B cell (primary cell): ENCODE measurements at regions of chr15 and their contacts with region 1.

Region 1: GRCh38 chr15:59247364-59247763 is 40.7 kb downstream of the LDHAL6B start:
- DNase-seq: peak; percentile 81
- ATAC-seq: peak; percentile 52
- H3K4me3 ChIP-seq: no peak overlapping the region
- H3K4me3 Mint-ChIP-seq: no peak overlapping the region
- H3K27ac ChIP-seq: no peak overlapping the region
- H3K27ac Mint-ChIP-seq: peak overlapping the region; percentile 37
- H3K4me1 ChIP-seq: peaks cover 30 to 42% of the 10 kb centered on the region in 2 donors
- H3K4me1 Mint-ChIP-seq: peaks cover 59% of the 10 kb centered on the region
- H3K27me3 ChIP-seq: no peaks in the 10 kb centered on the region
- H3K27me3 Mint-ChIP-seq: no peaks in the 10 kb centered on the region
- CTCF ChIP-seq: peak; percentile 80

Region 2: GRCh38 chr15:59174835-59175831 is 72.2 kb before region 1 on chr15:
- CTCF ChIA-PET with region 1: interaction called, 13 read pairs
- POLR2A ChIA-PET with region 1: no interaction called
- intact Hi-C with region 1: no loop called
- DNase-seq: peak; percentile 57
- ATAC-seq: peak; percentile 94
- H3K4me3 ChIP-seq: no peak overlapping the region
- H3K4me3 Mint-ChIP-seq: no peak overlapping the region
- H3K27ac ChIP-seq: no peak overlapping the region
- H3K27ac Mint-ChIP-seq: no peak overlapping the region
- H3K4me1 ChIP-seq: no peaks in the 10 kb centered on the region
- H3K4me1 Mint-ChIP-seq: peaks cover 7% of the 10 kb centered on the region
- H3K27me3 ChIP-seq: no peaks in the 10 kb centered on the region
- H3K27me3 Mint-ChIP-seq: no peaks in the 10 kb centered on the region
- CTCF ChIP-seq: peak; percentile 55

Region 3: DNA sequence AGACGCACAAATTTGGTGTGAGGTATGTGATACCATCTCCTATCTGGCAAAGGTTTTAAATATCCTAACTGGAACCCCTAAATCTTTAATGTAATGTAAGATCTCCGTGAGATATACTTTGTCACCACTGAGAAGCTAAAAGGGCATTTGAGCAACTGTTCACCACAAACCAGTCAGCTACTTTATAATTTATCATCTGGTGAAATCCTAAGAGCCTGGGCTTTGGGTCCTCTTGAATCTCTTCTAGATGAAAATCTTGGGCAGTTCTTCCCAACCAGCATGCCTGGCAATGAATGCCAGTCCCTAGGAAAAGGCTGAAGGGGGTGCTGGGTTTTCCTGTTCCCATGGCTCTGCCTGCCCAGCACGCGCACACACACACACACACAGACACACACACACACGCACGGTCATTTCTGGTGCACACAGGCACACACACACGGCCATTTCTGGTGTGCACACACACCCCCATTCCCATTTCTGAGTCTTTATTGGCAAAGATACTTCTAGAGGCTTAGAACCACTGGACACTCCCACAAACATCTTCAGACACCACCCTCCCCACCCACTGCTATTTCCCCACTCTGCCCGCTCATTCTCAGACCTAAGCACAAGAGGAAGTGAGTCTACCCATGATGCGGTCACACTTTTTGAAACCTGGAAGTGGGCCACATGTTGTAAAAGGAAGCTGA is 52.7 kb after region 1 on chr15:
- CTCF ChIA-PET with region 1: interaction called, 23 read pairs
- POLR2A ChIA-PET with region 1: interaction called, 8 read pairs
- intact Hi-C with region 1: loop called (anchors 1 kb)
- DNase-seq: peak; percentile 92
- ATAC-seq: peak; percentile 89
- H3K4me3 ChIP-seq: peak overlapping the region in 2 of 5 experiments; percentile 16 to 26
- H3K4me3 Mint-ChIP-seq: peak overlapping the region; percentile 64
- H3K27ac ChIP-seq: peak overlapping the region; percentile 62 to 78
- H3K27ac Mint-ChIP-seq: peak overlapping the region; percentile 79
- H3K4me1 ChIP-seq: peaks cover 70 to 88% of the 10 kb centered on the region in 2 donors
- H3K4me1 Mint-ChIP-seq: peaks cover 84% of the 10 kb centered on the region
- H3K27me3 ChIP-seq: no peaks in the 10 kb centered on the region
- H3K27me3 Mint-ChIP-seq: no peaks in the 10 kb centered on the region
- CTCF ChIP-seq: no peak

Region 4: DNA sequence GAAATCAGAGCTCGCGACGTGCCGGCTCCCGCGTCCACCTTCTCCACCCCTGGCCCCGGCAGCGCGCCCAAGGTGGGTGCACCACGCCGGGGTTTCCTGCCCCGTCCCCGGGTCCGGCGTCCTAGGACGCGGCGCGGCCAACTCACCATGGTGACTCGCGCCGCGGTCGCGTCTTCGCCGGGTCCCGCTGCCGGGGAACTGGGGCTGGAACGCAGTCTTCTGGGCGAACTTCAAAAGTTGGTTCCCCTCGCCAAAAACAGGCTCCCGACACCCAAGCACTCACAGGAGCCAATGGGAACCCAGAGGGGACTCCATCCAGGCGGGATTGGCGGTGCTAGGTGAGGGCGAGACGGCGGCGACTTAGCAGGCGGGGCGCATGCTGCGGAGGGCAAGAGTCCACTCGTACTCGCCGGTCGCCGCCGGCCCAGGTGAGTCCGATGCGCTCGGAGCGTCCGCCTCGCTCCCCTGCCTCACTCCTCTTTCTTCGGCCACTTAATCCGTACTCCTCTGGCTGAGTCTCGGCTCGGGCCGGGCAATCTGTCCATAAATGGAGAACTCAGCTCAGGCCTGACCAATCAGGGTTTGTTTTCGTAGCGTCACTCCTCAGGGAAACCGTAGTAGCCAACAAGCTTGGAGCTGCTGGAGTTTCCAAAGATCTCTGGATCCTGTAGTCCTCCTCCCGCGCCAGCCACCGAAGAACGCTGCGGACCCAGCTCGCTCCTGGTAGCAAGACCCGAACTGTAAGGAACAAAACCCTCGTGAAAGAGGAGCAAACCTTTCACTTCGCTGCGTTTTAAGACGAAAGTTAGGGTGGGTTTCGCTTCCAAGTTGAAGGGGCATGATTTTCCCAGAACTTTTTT is 125.2 kb after region 1 on chr15 and contains the start of gene MYO1E:
- CTCF ChIA-PET with region 1: interaction called, 9 read pairs
- POLR2A ChIA-PET with region 1: no interaction called
- intact Hi-C with region 1: loop called (anchors 1 kb)
- DNase-seq: peak; percentile 73
- ATAC-seq: peak; percentile 62
- H3K4me3 ChIP-seq: peak within 1 kb of the TSS; percentile 63 to 98 (median 85)
- H3K4me3 Mint-ChIP-seq: peak within 1 kb of the TSS; percentile 99
- H3K27ac ChIP-seq: peak within 1 kb of the TSS; percentile 72 to 77
- H3K27ac Mint-ChIP-seq: peak within 1 kb of the TSS; percentile 94
- H3K4me1 ChIP-seq: peaks cover 35 to 37% of the 10 kb centered on the region in 2 donors
- H3K4me1 Mint-ChIP-seq: peaks cover 53% of the 10 kb centered on the region
- H3K27me3 ChIP-seq: no peaks in the 10 kb centered on the region
- H3K27me3 Mint-ChIP-seq: no peaks in the 10 kb centered on the region
- CTCF ChIP-seq: no peak
- total RNA-seq, gene MYO1E: 100.0 and 111 TPM in 2 replicates

Region 5: GRCh38 chr15:59516655-59517461 is 269.5 kb after region 1 on chr15:
- CTCF ChIA-PET with region 1: interaction called, 11 read pairs
- POLR2A ChIA-PET with region 1: interaction called, 4 read pairs
- intact Hi-C with region 1: no loop called
- DNase-seq: peak; percentile 77
- ATAC-seq: peak; percentile 77
- H3K4me3 ChIP-seq: peak overlapping the region in 2 of 5 experiments; percentile 11 to 25
- H3K4me3 Mint-ChIP-seq: peak overlapping the region; percentile 70
- H3K27ac ChIP-seq: peak overlapping the region; percentile 93 to 94
- H3K27ac Mint-ChIP-seq: peak overlapping the region; percentile 95
- H3K4me1 ChIP-seq: peaks cover 63 to 68% of the 10 kb centered on the region in 2 donors
- H3K4me1 Mint-ChIP-seq: peaks cover 56% of the 10 kb centered on the region
- H3K27me3 ChIP-seq: no peaks in the 10 kb centered on the region
- H3K27me3 Mint-ChIP-seq: no peaks in the 10 kb centered on the region
- CTCF ChIP-seq: no peak